ENCODE measurements at regions of chr1 and their contacts with region 1.

Region 1: GRCh38 chr1:27402349-27402754 is 9.9 kb downstream of the GPR3 start:
- DNase-seq: peak; percentile 83
- H3K4me3 ChIP-seq: no peak overlapping the region
- H3K27ac ChIP-seq: peak overlapping the region; percentile 70 to 77
- H3K4me1 ChIP-seq: peaks cover 39% of the 10 kb centered on the region
- H3K27me3 ChIP-seq: no peaks in the 10 kb centered on the region
- CTCF ChIP-seq: peak in 3 of 4 experiments; percentile 73 to 89 (median 82)
- POLR2A ChIP-seq: no peak

Region 2: GRCh38 chr1:27556781-27557595 is 154.6 kb after region 1 on chr1:
- intact Hi-C with region 1: loop called (anchors 5 kb)
- DNase-seq: peak; percentile 87
- H3K4me3 ChIP-seq: peak overlapping the region in 1 of 2 donors; percentile 11
- H3K27ac ChIP-seq: peak overlapping the region; percentile 76 to 85
- H3K4me1 ChIP-seq: no peaks in the 10 kb centered on the region
- H3K27me3 ChIP-seq: no peaks in the 10 kb centered on the region
- CTCF ChIP-seq: peak; percentile 87 to 95 (median 90)
- POLR2A ChIP-seq: peak; percentile 53

Region 3: GRCh38 chr1:27624467-27625178 is 222.3 kb after region 1 on chr1:
- intact Hi-C with region 1: no loop called
- DNase-seq: no peak
- H3K4me3 ChIP-seq: no peak overlapping the region
- H3K27ac ChIP-seq: no peak overlapping the region
- H3K4me1 ChIP-seq: no peaks in the 10 kb centered on the region
- H3K27me3 ChIP-seq: no peaks in the 10 kb centered on the region
- CTCF ChIP-seq: no peak
- POLR2A ChIP-seq: no peak